ENCODE measurements at regions of chr16 and their contacts with region 1.

Region 1: DNA sequence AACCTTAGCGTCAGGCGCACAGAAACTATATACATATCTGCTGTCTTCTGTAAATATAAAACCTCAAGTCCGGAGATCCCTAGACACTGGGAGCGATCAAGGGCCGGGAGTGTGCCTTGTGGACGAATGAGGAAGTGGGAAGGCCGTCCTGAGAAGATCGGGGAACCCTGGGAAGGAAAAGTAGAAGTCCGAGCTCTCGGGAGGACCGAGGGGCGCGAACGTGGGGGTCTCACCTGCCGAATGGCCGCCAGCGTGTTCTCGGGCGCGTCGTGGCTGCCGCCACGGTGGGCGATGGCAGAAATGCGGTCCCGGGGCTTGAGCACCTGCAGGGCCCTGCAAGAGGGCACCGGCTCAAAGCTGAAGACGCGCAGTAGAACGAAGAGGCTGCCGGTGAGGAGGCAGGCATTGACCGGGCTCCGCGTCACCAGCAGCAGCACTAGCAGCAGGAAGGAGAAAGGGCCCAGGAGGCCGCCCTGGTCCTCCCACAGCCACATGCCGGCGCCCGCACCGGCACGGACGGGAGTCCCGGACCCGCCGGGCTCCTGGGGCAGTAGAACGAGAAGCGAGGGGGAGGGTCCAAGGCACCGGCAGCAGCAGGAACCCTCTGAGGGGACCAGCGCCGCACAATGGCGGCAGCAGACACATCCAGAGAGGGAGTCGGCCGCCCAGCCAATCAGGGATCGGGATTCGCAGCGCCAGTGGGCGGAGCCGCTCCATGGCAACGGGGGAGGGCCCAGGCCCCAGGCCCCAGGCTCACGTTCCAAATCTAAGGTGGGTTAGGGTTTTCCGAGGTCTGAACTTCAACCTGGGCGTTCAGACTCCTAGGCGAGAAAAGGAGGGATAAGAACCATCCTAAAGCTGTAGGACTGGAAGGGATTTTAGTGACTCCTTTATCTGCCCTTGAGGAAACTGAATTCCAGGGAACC is at the start of gene GDE1:
- DNase-seq: peak; percentile 64
- ATAC-seq: peak; percentile 77
- H3K4me3 ChIP-seq: peak within 1 kb of the TSS; percentile 81
- H3K27ac ChIP-seq: peak within 1 kb of the TSS; percentile 74
- H3K4me1 ChIP-seq: peaks cover 14% of the 10 kb centered on the region
- H3K27me3 ChIP-seq: no peaks in the 10 kb centered on the region
- CTCF ChIP-seq: peak; percentile 39 to 61 (median 50); a peak in 5 of 6 replicates
- EP300 ChIP-seq: no peak
- POLR2A ChIP-seq: peak; percentile 89
- RAD21 ChIP-seq: no peak
- polyA plus RNA-seq, gene GDE1: 14.8 to 17.3 TPM

Region 2: DNA sequence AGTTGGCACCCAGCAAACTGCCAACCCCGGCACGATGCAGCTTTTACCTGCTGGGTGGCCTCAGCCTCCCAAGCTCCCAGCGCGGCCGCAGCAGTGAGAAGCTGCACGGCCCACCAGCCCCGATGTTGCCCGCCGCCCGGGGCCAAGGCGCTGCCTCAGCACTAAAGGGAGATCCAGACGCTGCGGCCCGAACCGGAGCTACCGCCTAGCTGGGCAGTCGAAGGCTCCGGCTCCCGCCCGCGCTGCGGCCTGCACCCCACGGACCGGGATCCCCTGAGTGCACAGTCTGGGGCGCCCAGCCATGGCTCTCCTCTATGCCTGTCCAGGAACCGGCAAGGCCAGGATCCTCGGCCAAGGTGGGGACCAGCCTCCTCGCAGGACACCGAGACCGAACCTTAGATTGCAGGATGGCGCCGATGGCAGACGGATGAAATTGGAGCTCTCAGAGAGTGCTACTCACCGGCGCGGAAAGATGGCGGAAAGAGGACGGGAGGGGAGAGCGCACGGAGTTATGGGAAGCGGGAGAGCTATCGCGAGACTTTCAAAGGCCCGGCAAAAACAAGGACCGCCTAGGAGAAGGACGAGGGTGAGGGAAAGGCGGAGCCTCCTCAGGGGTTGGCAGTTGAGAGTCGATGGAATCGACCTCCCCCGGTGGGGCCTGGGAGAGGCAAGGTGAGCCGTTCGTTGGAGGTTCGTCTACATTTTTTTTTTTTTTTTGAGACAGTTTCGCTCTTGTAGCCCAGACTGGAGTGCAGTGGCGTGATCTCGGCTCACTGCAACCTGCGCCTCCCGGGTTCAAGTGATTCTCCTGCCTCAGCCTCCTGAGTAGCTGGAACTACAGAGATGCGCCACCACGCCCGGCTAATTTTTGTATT is 731.6 kb before region 1 on chr16 and contains the start of gene RPS15A:
- CTCF ChIA-PET with region 1: no interaction called
- POLR2A ChIA-PET with region 1: no interaction called
- RAD21 ChIA-PET with region 1: no interaction called
- SMC1A ChIA-PET with region 1: no interaction called
- in situ Hi-C with region 1: loop called (anchors 10 kb)
- intact Hi-C with region 1: no loop called
- DNase-seq: peak; percentile 88
- ATAC-seq: peak; percentile 89
- H3K4me3 ChIP-seq: peak within 1 kb of the TSS; percentile 93
- H3K27ac ChIP-seq: peak within 1 kb of the TSS; percentile 91
- H3K4me1 ChIP-seq: peaks cover 10% of the 10 kb centered on the region
- H3K27me3 ChIP-seq: no peaks in the 10 kb centered on the region
- CTCF ChIP-seq: no peak
- EP300 ChIP-seq: 0 out of 4 replicates have a peak, but pooled peaks of 1 of the 2 experiments have one; percentile 8
- POLR2A ChIP-seq: peak; percentile 99
- RAD21 ChIP-seq: no peak
- polyA plus RNA-seq, gene RPS15A: 2,843 to 3,155 TPM

Region 3: DNA sequence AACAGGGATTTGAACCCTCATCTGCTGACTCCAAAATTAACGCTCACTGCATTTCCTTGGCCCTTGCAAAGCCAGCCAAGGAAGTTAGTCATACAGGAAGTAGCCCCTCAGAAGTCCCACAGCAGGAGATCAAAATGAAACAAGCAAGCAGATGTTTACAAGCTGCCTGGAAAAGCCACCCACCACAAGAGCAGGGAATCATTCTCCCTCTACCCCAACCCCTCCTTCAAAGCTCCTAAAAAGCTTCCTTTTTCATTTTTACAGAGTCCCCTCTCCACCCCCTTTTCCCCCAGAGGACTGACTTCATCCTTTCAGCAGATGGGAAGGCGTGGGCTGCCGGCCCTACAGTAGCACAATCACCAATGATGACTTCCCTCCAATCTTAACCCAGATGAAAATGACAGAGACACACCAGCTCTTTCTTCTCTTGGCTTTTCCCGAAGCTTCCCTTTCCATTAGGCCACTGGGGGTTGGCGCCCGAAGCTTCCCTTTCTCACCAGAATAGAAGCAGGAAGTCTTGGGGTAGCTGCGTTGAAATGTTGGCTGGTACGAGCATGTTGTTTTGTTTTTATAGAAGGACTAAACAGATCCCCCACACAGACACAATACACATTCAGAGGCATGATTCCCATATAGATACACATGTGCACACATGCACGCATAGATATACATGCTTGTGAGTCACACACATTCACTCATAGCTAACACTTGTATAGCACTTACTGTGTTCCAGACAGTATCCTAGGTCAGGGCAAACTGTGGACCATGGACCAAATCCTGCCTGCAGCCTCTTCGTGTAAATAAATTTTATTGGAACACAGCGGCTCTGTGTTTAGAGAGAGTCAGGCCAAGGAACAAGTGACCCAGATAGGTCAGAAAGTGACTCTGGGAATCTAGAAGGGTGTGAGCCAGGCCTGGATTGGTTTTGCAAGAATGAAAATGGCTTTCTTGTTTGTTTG is 390.6 kb before region 1 on chr16:
- CTCF ChIA-PET with region 1: no interaction called
- POLR2A ChIA-PET with region 1: no interaction called
- RAD21 ChIA-PET with region 1: no interaction called
- SMC1A ChIA-PET with region 1: no interaction called
- in situ Hi-C with region 1: no loop called
- intact Hi-C with region 1: no loop called
- DNase-seq: no peak
- ATAC-seq: peak; percentile 9; the same call in 2 of the 3 replicates
- H3K4me3 ChIP-seq: peak overlapping the region; percentile 10; the same call in 1 of the 2 replicates
- H3K27ac ChIP-seq: peak overlapping the region; percentile 29
- H3K4me1 ChIP-seq: peaks cover 73% of the 10 kb centered on the region
- H3K27me3 ChIP-seq: no peaks in the 10 kb centered on the region
- CTCF ChIP-seq: no peak
- EP300 ChIP-seq: no peak
- POLR2A ChIP-seq: no peak
- RAD21 ChIP-seq: no peak